ENCODE measurements at regions of chrX and their contacts with region 1.

Region 1: DNA sequence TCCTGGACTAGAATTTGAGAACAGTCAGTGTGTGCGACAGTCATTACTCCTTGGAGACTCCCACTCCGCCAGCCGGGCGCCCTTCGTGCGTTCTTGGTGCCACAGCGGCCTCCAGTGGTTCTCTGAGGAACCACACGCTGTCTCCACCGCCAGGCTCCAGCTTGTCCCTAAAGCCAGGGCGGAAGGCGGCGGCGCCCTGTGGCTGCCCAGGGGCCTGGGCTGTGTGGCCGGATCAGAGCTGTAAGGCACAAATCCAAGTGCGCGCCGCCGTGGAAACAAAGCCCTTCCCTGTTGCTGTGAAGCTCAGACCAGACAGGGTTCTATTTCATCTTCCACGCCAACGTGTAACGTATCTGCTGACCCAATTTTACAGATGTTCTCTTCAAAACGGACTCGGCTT is 34.2 kb downstream of the IDS start:
- DNase-seq: no peak
- H3K4me3 ChIP-seq: peak overlapping the region; percentile 29
- CTCF ChIP-seq: peak; percentile 90

Region 2: DNA sequence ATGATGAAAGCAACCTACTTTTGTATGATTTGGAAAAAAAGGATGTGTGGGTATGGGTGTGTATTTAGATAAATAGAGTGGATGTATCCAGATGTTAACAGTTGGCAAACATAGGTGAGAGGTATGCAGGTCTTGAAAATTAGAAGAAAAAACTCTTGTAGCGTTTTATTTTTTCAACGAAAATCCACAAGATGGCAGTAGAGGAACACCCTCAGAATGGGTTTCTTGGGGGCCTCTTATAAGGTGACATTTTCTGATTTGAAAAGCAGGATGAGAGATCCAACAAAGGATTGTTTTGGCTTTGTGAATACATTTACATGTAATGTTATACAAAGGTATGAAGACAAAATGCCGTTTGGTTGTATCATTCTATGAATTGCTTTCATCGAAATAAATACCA is 1421.5 kb before region 1 on chrX:
- CTCF ChIA-PET with region 1: interaction called, 32 read pairs
- POLR2A ChIA-PET with region 1: no interaction called
- DNase-seq: no peak
- H3K4me3 ChIP-seq: no peak overlapping the region
- CTCF ChIP-seq: peak; percentile 14

Region 3: GRCh38 chrX:149286940-149287349 is 184.0 kb before region 1 on chrX:
- CTCF ChIA-PET with region 1: interaction called, 12 read pairs
- POLR2A ChIA-PET with region 1: no interaction called
- DNase-seq: no peak
- H3K4me3 ChIP-seq: no peak overlapping the region
- CTCF ChIP-seq: peak; percentile 49

Region 4: GRCh38 chrX:149306445-149306844 is 164.5 kb before region 1 on chrX:
- CTCF ChIA-PET with region 1: interaction called, 13 read pairs
- POLR2A ChIA-PET with region 1: no interaction called
- DNase-seq: no peak
- H3K4me3 ChIP-seq: no peak overlapping the region
- CTCF ChIP-seq: no peak

Region 5: GRCh38 chrX:149563359-149563758 is 92.4 kb after region 1 on chrX:
- CTCF ChIA-PET with region 1: no interaction called
- POLR2A ChIA-PET with region 1: no interaction called
- DNase-seq: no peak
- H3K4me3 ChIP-seq: no peak overlapping the region
- CTCF ChIP-seq: no peak